ENCODE measurements at regions of chr1 and their contacts with region 1.

Region 1: GRCh38 chr1:145720877-145721671 is 1.8 kb downstream of the CD160 start:
- DNase-seq: peak; percentile 46 to 69 (median 55)
- H3K4me3 ChIP-seq: peak overlapping the region in 1 of 2 donors; percentile 21
- H3K4me3 Mint-ChIP-seq: peak overlapping the region; percentile 43 to 82 (median 66)
- H3K27ac ChIP-seq: no peak overlapping the region
- H3K27ac Mint-ChIP-seq: peak overlapping the region in 3 of 7 donors; percentile 18 to 65 (median 55)
- H3K4me1 ChIP-seq: peaks cover 8% of the 10 kb centered on the region
- H3K4me1 Mint-ChIP-seq: peaks cover 6 to 17% (median 14%) of the 10 kb centered on the region in 4 donors
- H3K27me3 ChIP-seq: no peaks in the 10 kb centered on the region
- H3K27me3 Mint-ChIP-seq: peaks cover 7 to 13% of the 10 kb centered on the region in 2 donors

Region 2: DNA sequence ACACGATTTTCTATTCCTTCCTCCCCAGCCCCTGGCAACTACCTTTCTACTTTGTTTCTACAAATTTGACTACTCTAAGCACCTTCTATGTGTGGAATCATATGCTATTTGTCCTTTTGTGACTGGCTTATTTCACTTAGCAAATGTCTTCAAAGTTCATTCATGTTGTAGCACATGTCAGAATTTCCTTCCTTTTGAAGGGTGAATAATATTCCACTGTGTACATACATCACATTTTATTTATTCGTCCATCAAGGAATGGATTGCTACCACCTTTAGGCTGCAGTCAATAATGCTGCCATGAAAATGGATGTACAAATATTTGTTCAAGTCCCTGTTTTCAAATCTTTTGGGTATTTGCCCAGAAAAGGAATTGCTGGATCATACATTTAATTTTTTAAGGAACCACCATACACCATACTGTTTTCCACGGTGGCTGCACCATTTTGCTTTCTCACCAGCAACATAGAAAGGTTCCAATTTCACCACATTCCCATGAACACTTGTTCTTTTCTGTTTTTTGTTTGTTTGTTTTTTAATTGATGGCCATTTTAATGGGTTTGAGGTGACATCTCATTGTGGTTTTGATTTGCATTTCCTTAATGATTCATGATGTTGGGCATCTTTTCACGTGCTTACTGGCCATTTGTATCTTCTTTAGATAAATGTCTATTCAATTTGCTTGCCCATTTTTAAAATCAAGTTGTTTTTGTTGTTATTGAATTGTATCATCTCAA is 10.6 kb before region 1 on chr1:
- CTCF ChIA-PET with region 1: interaction called, 15 read pairs
- POLR2A ChIA-PET with region 1: no interaction called
- intact Hi-C with region 1: no loop called
- DNase-seq: no peak
- H3K4me3 ChIP-seq: no peak overlapping the region
- H3K4me3 Mint-ChIP-seq: no peak overlapping the region
- H3K27ac ChIP-seq: no peak overlapping the region
- H3K27ac Mint-ChIP-seq: no peak overlapping the region
- H3K4me1 ChIP-seq: no peaks in the 10 kb centered on the region
- H3K4me1 Mint-ChIP-seq: no peaks in the 10 kb centered on the region
- H3K27me3 ChIP-seq: no peaks in the 10 kb centered on the region
- H3K27me3 Mint-ChIP-seq: peaks cover 0 to 1% of the 10 kb centered on the region in 2 donors

Measured in CD4-positive, alpha-beta memory T cell (primary cell).